Right ventricle myocardium superior (tissue), 1 donor: ENCODE measurements at regions of chr15 and their contacts with region 1.

Region 1: GRCh38 chr15:63093486-63094205 is 28.0 kb upstream of the LACTB start:
- DNase-seq: peak; percentile 81
- ATAC-seq: peak; percentile 94

Region 2: DNA sequence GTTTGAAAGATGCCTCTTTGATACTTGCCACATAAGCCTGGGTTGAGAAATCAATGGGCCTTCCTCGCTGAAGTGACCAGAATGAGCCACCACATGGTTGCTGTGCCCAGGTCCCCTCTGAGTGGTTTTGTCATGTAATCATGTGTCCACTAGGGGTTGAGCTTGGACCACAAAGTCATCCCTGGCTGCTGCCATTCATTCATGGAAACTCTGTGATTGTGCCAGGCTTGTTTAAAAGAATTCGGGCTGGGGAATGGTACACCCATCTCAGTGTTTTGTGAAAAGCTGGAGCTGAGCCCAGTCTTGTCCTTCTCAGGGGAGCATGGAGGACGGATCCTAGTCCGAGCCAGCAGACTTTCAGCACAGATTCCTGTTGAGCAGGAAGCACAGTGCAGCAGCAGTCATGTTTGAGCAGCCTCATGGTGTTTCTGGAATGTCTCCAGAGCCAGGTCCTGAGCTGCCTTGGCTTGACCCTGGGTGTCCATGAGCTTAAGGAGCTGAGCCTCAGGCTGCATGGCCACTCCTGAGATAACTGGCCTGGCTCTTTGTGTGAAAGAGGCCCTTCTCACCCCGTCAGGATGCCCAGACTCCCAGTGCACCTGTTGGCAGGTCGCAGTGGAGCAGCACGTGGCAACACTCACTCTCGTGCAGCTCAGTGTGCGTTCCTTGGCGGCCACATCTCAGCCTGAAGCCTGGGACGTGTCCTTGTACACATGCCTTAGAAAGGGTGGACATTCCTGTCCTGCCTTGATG is 311.4 kb before region 1 on chr15:
- intact Hi-C with region 1: loop called (anchors 5 kb)
- DNase-seq: peak; percentile 78
- ATAC-seq: peak; percentile 88

Region 3: DNA sequence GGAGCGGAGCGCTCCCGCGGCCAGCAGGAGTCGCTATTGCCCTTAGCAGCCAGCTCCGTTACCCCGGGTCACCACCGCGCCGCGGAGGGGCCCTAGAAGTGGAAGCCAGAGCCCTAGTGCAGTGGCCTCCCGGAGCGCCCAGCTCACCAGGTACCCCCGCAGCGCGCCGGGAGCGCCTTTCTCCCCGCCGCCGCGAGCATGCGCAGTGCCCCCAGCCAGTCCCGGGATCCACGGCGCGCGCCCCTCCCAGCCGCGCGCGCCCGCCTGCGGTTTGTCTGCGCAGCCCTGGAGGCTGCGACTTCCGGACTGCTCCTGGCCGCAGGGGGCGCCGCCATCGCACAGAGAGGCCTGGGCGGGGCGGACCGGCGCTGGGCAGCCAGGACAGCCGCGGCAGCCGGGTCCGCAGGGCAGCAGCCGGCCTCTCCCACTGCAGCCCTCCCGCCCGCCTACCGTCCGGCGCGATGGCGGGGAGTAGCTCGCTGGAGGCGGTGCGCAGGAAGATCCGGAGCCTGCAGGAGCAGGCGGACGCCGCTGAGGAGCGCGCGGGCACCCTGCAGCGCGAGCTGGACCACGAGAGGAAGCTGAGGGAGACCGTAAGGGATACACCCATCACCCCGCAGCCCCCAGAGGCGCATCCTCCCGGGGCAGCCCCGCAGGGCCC is 45.4 kb before region 1 on chr15:
- intact Hi-C with region 1: loop called (anchors 2 kb)
- DNase-seq: peak; percentile 95
- ATAC-seq: peak; percentile 75

Region 4: GRCh38 chr15:63277038-63277892 is 183.6 kb after region 1 on chr15 and contains the start of gene APH1B:
- intact Hi-C with region 1: no loop called
- DNase-seq: peak; percentile 91
- ATAC-seq: peak; percentile 96
- total RNA-seq, gene APH1B: 7.1 TPM